Tibial artery (tissue), 4 donors: ENCODE measurements at regions of chr3 and their contacts with region 1.

Region 1: DNA sequence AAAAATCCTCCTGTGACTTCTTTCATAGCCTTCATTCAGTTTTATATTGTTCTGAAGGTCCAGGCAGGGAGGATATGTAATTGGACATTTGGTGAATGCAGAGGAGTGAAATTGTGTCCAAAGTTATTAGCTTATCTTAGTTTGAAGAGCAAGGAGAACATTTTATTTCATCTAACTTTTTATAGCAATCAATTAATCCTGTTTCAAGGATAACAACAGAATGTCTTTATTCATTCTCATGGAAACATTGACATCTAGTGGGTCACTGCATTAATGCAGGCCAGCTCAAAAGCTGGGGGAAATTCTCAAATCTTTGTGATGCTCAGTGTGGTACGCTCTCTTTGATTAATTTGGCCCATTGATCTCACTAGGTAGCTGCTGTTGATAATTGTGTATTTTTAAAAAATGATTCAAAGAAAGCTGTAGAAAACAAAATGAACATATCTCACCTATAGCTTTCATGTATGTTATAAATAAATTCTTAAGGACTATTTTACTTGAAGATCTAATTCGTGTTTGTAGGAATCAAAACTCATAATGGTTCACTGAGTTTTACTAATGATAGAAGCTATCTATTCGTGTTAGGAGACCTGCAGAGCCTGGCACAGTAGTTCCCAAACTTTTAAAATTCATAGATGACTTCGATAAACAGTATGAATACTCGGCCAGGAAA is 150.8 kb upstream of the KCNMB2 start:
- DNase-seq: no peak
- H3K4me3 ChIP-seq: no peak overlapping the region
- H3K27ac ChIP-seq: peak overlapping the region; percentile 13 to 58
- H3K4me1 ChIP-seq: peaks cover 0 to 38% (median 11%) of the 10 kb centered on the region in 4 donors
- H3K27me3 ChIP-seq: no peaks in the 10 kb centered on the region
- CTCF ChIP-seq: peak; percentile 84 to 87

Region 2: DNA sequence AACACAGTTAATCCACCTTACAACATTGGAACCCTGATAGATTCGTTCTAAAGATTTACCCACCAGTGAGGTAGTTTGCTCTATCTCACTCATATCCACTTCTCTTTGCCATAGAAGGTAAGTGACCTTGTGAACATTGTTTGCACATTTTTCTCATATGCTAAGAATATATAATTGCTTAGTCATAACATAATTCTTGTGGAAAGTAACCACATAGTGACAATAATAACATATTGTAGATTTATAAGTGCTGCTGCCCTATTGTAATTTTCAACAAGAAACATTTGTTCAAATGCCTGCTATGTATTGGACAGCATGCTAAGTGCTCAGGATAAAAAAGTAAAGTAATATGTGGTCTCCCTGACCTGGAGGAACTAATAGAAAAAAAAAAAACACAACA is 403.4 kb before region 1 on chr3:
- intact Hi-C with region 1: loop called (anchors 5 kb)
- DNase-seq: no peak
- H3K4me3 ChIP-seq: no peak overlapping the region
- H3K27ac ChIP-seq: no peak overlapping the region
- H3K4me1 ChIP-seq: peaks cover 0 to 10% (median 0%) of the 10 kb centered on the region in 4 donors
- H3K27me3 ChIP-seq: no peaks in the 10 kb centered on the region
- CTCF ChIP-seq: no peak